ENCODE measurements at regions of chr5 and their contacts with region 1.

Region 1: GRCh38 chr5:89729623-89730301 is 679.8 kb downstream of the CETN3 start:
- DNase-seq: peak; percentile 8
- H3K4me3 Mint-ChIP-seq: no peak overlapping the region
- H3K27ac Mint-ChIP-seq: no peak overlapping the region
- H3K4me1 Mint-ChIP-seq: peaks cover 12% of the 10 kb centered on the region
- H3K27me3 Mint-ChIP-seq: no peaks in the 10 kb centered on the region
- CTCF ChIP-seq: peak; percentile 22

Region 2: GRCh38 chr5:88875341-88876234 is 854.2 kb before region 1 on chr5:
- CTCF ChIA-PET with region 1: no interaction called
- POLR2A ChIA-PET with region 1: no interaction called
- intact Hi-C with region 1: loop called (anchors 5 kb)
- DNase-seq: no peak
- H3K4me3 Mint-ChIP-seq: no peak overlapping the region
- H3K27ac Mint-ChIP-seq: no peak overlapping the region
- H3K4me1 Mint-ChIP-seq: no peaks in the 10 kb centered on the region
- H3K27me3 Mint-ChIP-seq: peaks cover 61% of the 10 kb centered on the region
- CTCF ChIP-seq: no peak

Region 3: GRCh38 chr5:89255845-89256463 is 473.8 kb before region 1 on chr5:
- CTCF ChIA-PET with region 1: no interaction called
- POLR2A ChIA-PET with region 1: no interaction called
- intact Hi-C with region 1: loop called (anchors 2 kb)
- DNase-seq: peak; percentile 43
- H3K4me3 Mint-ChIP-seq: no peak overlapping the region
- H3K27ac Mint-ChIP-seq: no peak overlapping the region
- H3K4me1 Mint-ChIP-seq: no peaks in the 10 kb centered on the region
- H3K27me3 Mint-ChIP-seq: no peaks in the 10 kb centered on the region
- CTCF ChIP-seq: no peak

Region 4: GRCh38 chr5:90184764-90185163 is 455.0 kb after region 1 on chr5:
- CTCF ChIA-PET with region 1: interaction called, 3 read pairs
- POLR2A ChIA-PET with region 1: no interaction called
- intact Hi-C with region 1: loop called (anchors 10 kb)
- DNase-seq: no peak
- H3K4me3 Mint-ChIP-seq: no peak overlapping the region
- H3K27ac Mint-ChIP-seq: no peak overlapping the region
- H3K4me1 Mint-ChIP-seq: peaks cover 6% of the 10 kb centered on the region
- H3K27me3 Mint-ChIP-seq: no peaks in the 10 kb centered on the region
- CTCF ChIP-seq: no peak

Region 5: GRCh38 chr5:90221942-90222341 is 492.2 kb after region 1 on chr5:
- CTCF ChIA-PET with region 1: interaction called, 10 read pairs
- POLR2A ChIA-PET with region 1: no interaction called
- intact Hi-C with region 1: no loop called
- DNase-seq: peak; percentile 6
- H3K4me3 Mint-ChIP-seq: no peak overlapping the region
- H3K27ac Mint-ChIP-seq: no peak overlapping the region
- H3K4me1 Mint-ChIP-seq: no peaks in the 10 kb centered on the region
- H3K27me3 Mint-ChIP-seq: no peaks in the 10 kb centered on the region
- CTCF ChIP-seq: no peak